Naive thymus-derived CD4-positive, alpha-beta T cell (primary cell): ENCODE measurements at regions of chr6 and their contacts with region 1.

Region 1: GRCh38 chr6:27893059-27893835 is 18.9 kb downstream of the OR2B2 start:
- DNase-seq: peak; percentile 75 to 95 (median 92)
- ATAC-seq: peak; percentile 83
- H3K4me3 ChIP-seq: peak overlapping the region; percentile 72
- H3K4me3 Mint-ChIP-seq: no peak overlapping the region
- H3K27ac ChIP-seq: peak overlapping the region; percentile 82
- H3K27ac Mint-ChIP-seq: peak overlapping the region in 1 of 9 donors; percentile 97
- H3K4me1 ChIP-seq: peaks cover 4 to 20% of the 10 kb centered on the region in 2 donors
- H3K4me1 Mint-ChIP-seq: peaks cover 9 to 55% (median 30%) of the 10 kb centered on the region in 7 donors
- H3K27me3 ChIP-seq: no peaks in the 10 kb centered on the region
- H3K27me3 Mint-ChIP-seq: peaks cover 0 to 8% (median 0%) of the 10 kb centered on the region in 5 donors

Region 2: DNA sequence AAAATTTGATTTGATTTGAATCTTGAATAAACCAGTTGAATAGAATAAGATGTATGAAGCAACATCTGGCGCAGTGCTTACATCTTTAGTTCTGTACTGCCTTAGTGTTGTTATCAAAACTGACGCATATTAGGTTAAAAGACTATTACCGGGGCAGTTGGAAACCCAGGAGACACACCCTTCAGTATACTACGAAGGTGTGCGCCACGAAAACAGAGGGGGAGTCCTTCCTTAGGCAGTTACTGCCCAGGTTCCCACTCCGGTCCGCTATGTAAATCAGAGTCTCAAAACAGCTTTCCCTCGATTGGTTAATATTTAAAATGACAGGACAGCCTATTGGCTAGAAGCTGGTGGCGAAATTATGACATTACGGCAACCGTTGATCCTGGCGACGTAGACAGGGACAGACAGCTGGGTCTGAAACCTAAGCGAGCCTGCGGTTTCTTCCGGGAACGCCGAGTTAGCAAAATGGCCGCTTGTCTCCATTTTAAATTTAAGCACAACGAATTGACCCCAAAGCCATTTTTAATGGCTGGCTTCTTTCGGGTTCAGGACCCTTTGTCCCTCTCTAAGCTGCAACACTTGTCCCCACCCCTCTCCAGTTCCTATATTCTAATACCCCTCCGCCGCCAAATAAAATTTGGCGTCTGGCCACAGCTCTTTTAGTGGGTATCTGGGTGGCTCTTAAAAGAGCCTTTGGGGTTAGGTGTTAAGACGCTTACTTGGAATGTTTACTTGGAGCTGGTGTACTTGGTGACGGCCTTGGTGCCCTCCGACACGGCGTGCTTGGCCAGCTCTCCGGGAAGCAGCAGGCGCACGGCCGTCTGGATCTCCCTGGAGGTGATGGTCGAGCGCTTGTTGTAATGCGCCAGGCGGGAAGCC is 1770.2 kb before region 1 on chr6:
- CTCF ChIA-PET with region 1: no interaction called
- POLR2A ChIA-PET with region 1: interaction called, 41 read pairs
- intact Hi-C with region 1: loop called in 1 of 2 experiments (anchors 1 kb)
- DNase-seq: peak; percentile 68 to 99 (median 96)
- ATAC-seq: peak; percentile 78
- H3K4me3 ChIP-seq: peak overlapping the region; percentile 94
- H3K4me3 Mint-ChIP-seq: peak overlapping the region; percentile 92 to 100 (median 98)
- H3K27ac ChIP-seq: peak overlapping the region; percentile 86
- H3K27ac Mint-ChIP-seq: peak overlapping the region; percentile 97 to 100 (median 99)
- H3K4me1 ChIP-seq: peaks cover 18 to 23% of the 10 kb centered on the region in 2 donors
- H3K4me1 Mint-ChIP-seq: peaks cover 22 to 54% (median 30%) of the 10 kb centered on the region in 7 donors
- H3K27me3 ChIP-seq: no peaks in the 10 kb centered on the region
- H3K27me3 Mint-ChIP-seq: peaks cover 0 to 21% (median 0%) of the 10 kb centered on the region in 5 donors

Region 3: GRCh38 chr6:26607434-26608230 is 1285.6 kb before region 1 on chr6:
- CTCF ChIA-PET with region 1: no interaction called
- POLR2A ChIA-PET with region 1: no interaction called
- intact Hi-C with region 1: loop called in 1 of 2 experiments (anchors 5 kb)
- DNase-seq: peak in 8 of 9 donors; percentile 37 to 75 (median 70)
- ATAC-seq: peak; percentile 95
- H3K4me3 ChIP-seq: peak overlapping the region; percentile 46
- H3K4me3 Mint-ChIP-seq: peak overlapping the region; percentile 19 to 79 (median 56)
- H3K27ac ChIP-seq: no peak overlapping the region
- H3K27ac Mint-ChIP-seq: peak overlapping the region in 7 of 9 donors; percentile 22 to 68 (median 55)
- H3K4me1 ChIP-seq: no peaks in the 10 kb centered on the region
- H3K4me1 Mint-ChIP-seq: peaks cover 6 to 14% (median 10%) of the 10 kb centered on the region in 7 donors
- H3K27me3 ChIP-seq: no peaks in the 10 kb centered on the region
- H3K27me3 Mint-ChIP-seq: peaks cover 0 to 20% (median 5%) of the 10 kb centered on the region in 5 donors

Region 4: GRCh38 chr6:27177485-27178406 is 715.5 kb before region 1 on chr6:
- CTCF ChIA-PET with region 1: interaction called, 13 read pairs
- POLR2A ChIA-PET with region 1: interaction called, 5 read pairs
- intact Hi-C with region 1: loop called (anchors 1 to 2 kb)
- DNase-seq: peak; percentile 49 to 78 (median 66)
- ATAC-seq: peak; percentile 83
- H3K4me3 ChIP-seq: peak overlapping the region; percentile 99
- H3K4me3 Mint-ChIP-seq: peak overlapping the region; percentile 90 to 98 (median 96)
- H3K27ac ChIP-seq: peak overlapping the region; percentile 74
- H3K27ac Mint-ChIP-seq: peak overlapping the region; percentile 79 to 100 (median 95)
- H3K4me1 ChIP-seq: peaks cover 0 to 3% of the 10 kb centered on the region in 2 donors
- H3K4me1 Mint-ChIP-seq: peaks cover 0 to 33% (median 14%) of the 10 kb centered on the region in 7 donors
- H3K27me3 ChIP-seq: no peaks in the 10 kb centered on the region
- H3K27me3 Mint-ChIP-seq: peaks cover 0 to 37% (median 0%) of the 10 kb centered on the region in 5 donors

Region 5: DNA sequence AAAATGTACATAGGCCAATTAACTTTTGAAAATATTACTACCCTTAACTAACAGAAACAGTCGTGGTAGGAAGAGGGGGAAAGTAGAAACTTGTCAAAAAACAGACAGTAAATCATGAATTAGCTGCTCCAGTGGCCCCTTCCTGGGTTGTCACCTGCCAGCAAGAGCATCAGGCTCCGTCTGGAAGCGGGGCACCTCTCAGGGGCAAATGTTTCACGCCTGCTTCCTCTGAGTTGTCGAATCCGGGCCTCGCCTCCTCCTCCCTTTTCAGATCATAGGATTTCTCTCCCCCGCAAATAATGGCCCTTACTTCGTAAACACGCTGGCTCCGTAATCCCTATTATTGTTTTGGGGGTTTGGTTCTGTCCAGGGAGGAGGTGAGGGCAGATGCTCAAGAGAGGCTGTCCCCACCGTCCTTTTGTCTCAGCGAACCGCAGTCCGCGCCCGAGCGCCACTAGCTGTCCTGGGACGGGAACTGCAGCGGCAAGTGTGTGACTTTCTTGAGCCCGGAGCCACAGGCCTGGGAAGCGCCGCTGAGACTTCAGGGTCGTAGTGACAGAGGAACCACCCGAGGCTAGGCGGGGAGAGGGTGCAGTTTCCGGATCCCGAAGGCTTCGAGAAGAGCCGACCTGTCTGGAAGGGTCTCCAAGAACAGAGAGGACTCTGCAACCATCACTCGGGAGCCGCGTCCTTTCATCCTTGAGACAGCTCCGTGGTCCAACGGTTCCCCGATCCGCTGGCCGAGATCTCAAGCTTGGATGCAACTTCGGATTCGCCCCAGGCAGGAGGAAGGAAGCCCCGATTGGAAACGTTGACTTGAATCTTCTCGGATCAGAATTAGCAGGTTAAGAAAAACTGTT is 205.9 kb before region 1 on chr6:
- CTCF ChIA-PET with region 1: no interaction called
- POLR2A ChIA-PET with region 1: no interaction called
- intact Hi-C with region 1: loop called in 1 of 2 experiments (anchors 5 kb)
- DNase-seq: peak; percentile 57 to 79 (median 65)
- ATAC-seq: peak; percentile 81
- H3K4me3 ChIP-seq: peak overlapping the region; percentile 88
- H3K4me3 Mint-ChIP-seq: peak overlapping the region; percentile 87 to 96 (median 94)
- H3K27ac ChIP-seq: peak overlapping the region; percentile 61
- H3K27ac Mint-ChIP-seq: peak overlapping the region; percentile 86 to 100 (median 97)
- H3K4me1 ChIP-seq: peaks cover 4 to 6% of the 10 kb centered on the region in 2 donors
- H3K4me1 Mint-ChIP-seq: peaks cover 7 to 40% (median 27%) of the 10 kb centered on the region in 7 donors
- H3K27me3 ChIP-seq: no peaks in the 10 kb centered on the region
- H3K27me3 Mint-ChIP-seq: peaks cover 5 to 34% (median 5%) of the 10 kb centered on the region in 5 donors

Region 6: GRCh38 chr6:27864906-27865849 is 28.1 kb before region 1 on chr6:
- CTCF ChIA-PET with region 1: interaction called, 56 read pairs
- POLR2A ChIA-PET with region 1: interaction called, 717 read pairs
- intact Hi-C with region 1: loop called (anchors 1 kb)
- DNase-seq: peak; percentile 56 to 93 (median 89)
- ATAC-seq: peak; percentile 85
- H3K4me3 ChIP-seq: peak overlapping the region; percentile 74
- H3K4me3 Mint-ChIP-seq: peak overlapping the region; percentile 85 to 99 (median 97)
- H3K27ac ChIP-seq: peak overlapping the region; percentile 71
- H3K27ac Mint-ChIP-seq: peak overlapping the region; percentile 88 to 98 (median 95)
- H3K4me1 ChIP-seq: peaks cover 8 to 25% of the 10 kb centered on the region in 2 donors
- H3K4me1 Mint-ChIP-seq: peaks cover 22 to 64% (median 46%) of the 10 kb centered on the region in 7 donors
- H3K27me3 ChIP-seq: no peaks in the 10 kb centered on the region
- H3K27me3 Mint-ChIP-seq: peaks cover 0 to 16% (median 0%) of the 10 kb centered on the region in 5 donors

Region 7: DNA sequence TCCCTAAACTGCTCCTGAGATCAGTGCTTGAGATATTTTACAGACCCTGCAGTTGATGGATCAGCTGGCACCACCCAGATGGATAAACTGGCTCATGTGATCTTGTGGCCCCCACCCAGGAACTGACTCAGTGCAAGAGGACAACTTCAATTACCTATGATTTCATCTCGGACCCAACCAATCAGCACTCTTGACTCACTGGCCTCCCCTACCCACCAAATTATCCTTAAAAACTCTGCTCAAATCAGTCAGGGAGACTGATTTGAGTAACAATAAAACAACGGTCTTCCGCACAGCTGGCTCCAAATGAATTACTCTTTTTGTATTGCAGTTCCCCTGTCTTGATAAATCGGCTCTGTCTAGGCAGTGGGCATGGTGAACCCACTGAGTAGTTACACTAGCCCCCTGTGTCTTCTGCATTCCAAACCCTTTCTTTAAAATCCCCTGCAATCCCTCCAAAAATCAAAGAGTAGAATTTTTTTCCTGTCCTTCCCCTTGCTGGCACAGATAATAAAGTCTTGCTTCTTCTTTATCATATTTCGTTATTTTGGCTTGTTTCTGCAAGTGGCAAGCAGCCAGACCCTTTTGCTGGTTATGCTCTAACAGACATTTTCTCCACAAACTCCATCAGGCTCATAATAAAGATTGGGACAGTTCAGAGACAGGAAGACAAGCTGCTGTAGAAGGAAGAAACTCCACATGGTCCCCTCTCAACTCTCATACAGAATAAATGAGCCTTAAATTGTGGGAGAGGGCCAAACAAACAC is 112.1 kb after region 1 on chr6:
- CTCF ChIA-PET with region 1: no interaction called
- POLR2A ChIA-PET with region 1: no interaction called
- intact Hi-C with region 1: no loop called
- DNase-seq: no peak
- ATAC-seq: no peak
- H3K4me3 ChIP-seq: no peak overlapping the region
- H3K4me3 Mint-ChIP-seq: no peak overlapping the region
- H3K27ac ChIP-seq: no peak overlapping the region
- H3K27ac Mint-ChIP-seq: no peak overlapping the region
- H3K4me1 ChIP-seq: no peaks in the 10 kb centered on the region
- H3K4me1 Mint-ChIP-seq: peaks cover 0 to 2% (median 0%) of the 10 kb centered on the region in 7 donors
- H3K27me3 ChIP-seq: no peaks in the 10 kb centered on the region
- H3K27me3 Mint-ChIP-seq: peaks cover 6 to 48% (median 25%) of the 10 kb centered on the region in 5 donors